ENCODE measurements at regions of chr3 and their contacts with region 1.

Region 1: DNA sequence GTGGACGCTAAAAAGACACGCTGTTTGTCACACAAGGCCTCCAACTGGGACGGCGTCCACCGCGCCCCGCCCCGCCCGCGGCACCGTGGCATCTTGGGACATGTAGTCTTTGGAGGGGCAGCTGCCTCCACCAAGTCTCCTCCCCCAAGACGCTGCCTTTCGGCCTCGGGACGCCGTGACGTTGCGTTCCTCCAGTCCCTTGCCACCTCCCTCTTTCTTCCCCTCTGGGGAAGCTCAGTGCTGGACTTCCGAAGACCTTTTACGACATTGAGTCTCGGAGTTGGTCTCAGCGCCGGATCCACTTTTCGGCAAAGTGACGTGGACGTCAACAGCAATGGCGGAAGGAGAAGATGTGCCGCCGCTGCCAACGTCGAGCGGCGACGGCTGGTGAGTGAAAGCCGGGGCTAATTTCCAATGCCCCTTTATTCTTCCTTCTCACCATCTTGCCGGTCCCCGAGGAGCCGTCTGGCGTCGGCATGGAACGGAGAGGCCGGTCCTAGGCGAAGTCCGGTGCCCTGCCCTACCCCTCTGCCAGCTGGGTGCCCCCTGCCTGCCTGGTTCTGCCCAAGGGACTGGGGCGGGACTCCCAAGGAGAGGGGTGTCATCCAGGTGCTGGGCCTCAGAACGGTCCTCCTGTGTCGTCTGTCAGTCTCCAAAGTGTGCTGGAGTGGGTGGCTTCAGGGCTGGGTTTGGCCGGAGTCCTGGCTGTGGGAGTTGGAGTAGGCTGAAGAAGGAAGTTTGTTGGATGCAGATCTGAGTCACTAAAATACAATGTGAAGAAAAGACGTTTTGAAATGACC is at the start of gene TBC1D23:
- DNase-seq: peak; percentile 93
- H3K4me3 ChIP-seq: peak within 1 kb of the TSS; percentile 97 to 99
- H3K27ac ChIP-seq: peak within 1 kb of the TSS; percentile 86 to 93
- H3K4me1 ChIP-seq: peaks cover 16 to 25% of the 10 kb centered on the region in 2 experiments; a peak in 3 of 4 replicates
- H3K27me3 ChIP-seq: no peaks in the 10 kb centered on the region
- CTCF ChIP-seq: no peak; the same call in 1 of the 2 replicates
- EP300 ChIP-seq: no peak
- RAD21 ChIP-seq: no peak
- polyA plus RNA-seq, gene TBC1D23: 6.7 and 10.9 TPM in 2 replicates

Region 2: GRCh38 chr3:99833617-99834205 is 427.2 kb before region 1 on chr3:
- CTCF ChIA-PET with region 1: interaction called, 132 read pairs
- POLR2A ChIA-PET with region 1: no interaction called
- DNase-seq: peak; percentile 8
- H3K4me3 ChIP-seq: no peak overlapping the region
- H3K27ac ChIP-seq: no peak overlapping the region
- H3K4me1 ChIP-seq: peaks cover 0 to 4% of the 10 kb centered on the region in 2 experiments; a peak in 3 of 4 replicates
- H3K27me3 ChIP-seq: no peaks in the 10 kb centered on the region
- CTCF ChIP-seq: no peak
- EP300 ChIP-seq: no peak
- RAD21 ChIP-seq: no peak

Region 3: DNA sequence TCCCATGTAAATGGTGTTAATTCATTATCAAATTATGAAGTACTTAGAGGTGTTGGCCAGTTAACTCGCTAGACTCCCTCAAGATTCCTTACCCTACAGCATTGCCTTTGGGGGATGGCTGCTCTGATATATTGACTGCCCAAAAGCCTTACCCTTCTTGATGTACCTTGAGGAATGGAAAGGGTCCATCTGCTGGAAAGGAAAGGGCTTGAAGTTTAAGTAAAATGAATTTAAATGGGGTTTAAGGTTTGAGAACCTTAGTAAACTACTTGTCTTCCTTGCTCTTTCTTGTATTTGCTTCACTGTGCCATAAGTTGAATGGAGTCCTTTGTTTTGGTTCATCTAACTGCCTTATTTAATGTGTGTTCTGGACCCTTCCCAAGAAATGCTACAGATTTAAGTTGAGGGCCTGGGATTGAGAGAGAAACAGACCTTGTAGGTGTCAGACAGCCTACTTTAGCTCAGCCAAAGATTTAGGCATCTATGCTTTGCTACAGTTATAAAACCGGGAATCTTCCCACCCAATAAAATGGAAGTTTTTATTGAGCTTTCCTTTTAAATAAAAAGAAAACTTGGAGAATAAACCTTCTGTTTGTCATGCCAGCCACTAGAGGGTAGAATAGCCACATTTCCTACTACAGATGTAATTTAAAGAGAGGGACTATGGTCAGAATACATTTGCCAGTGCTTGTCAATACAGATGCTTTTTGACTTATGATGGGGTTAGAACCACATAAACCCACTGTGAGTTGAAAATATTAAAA is 417.9 kb before region 1 on chr3:
- CTCF ChIA-PET with region 1: interaction called, 132 read pairs
- POLR2A ChIA-PET with region 1: no interaction called
- DNase-seq: peak; percentile 37
- H3K4me3 ChIP-seq: no peak overlapping the region; a peak in 1 of 4 replicates
- H3K27ac ChIP-seq: peak overlapping the region; percentile 11 to 32; a peak in 2 of 4 replicates
- H3K4me1 ChIP-seq: peaks cover 4 to 7% of the 10 kb centered on the region in 2 experiments; a peak in 2 of 4 replicates
- H3K27me3 ChIP-seq: no peaks in the 10 kb centered on the region
- CTCF ChIP-seq: peak; percentile 86
- EP300 ChIP-seq: no peak
- RAD21 ChIP-seq: peak; percentile 84

Region 4: GRCh38 chr3:100306695-100307094 is 45.8 kb after region 1 on chr3:
- CTCF ChIA-PET with region 1: no interaction called
- POLR2A ChIA-PET with region 1: no interaction called
- DNase-seq: no peak
- H3K4me3 ChIP-seq: no peak overlapping the region
- H3K27ac ChIP-seq: no peak overlapping the region; a peak in 1 of 4 replicates
- H3K4me1 ChIP-seq: no peaks in the 10 kb centered on the region
- H3K27me3 ChIP-seq: no peaks in the 10 kb centered on the region
- CTCF ChIP-seq: no peak
- EP300 ChIP-seq: no peak
- RAD21 ChIP-seq: no peak